K562 (cell line): ENCODE measurements at regions of chr3 and their contacts with region 1.

Region 1: DNA sequence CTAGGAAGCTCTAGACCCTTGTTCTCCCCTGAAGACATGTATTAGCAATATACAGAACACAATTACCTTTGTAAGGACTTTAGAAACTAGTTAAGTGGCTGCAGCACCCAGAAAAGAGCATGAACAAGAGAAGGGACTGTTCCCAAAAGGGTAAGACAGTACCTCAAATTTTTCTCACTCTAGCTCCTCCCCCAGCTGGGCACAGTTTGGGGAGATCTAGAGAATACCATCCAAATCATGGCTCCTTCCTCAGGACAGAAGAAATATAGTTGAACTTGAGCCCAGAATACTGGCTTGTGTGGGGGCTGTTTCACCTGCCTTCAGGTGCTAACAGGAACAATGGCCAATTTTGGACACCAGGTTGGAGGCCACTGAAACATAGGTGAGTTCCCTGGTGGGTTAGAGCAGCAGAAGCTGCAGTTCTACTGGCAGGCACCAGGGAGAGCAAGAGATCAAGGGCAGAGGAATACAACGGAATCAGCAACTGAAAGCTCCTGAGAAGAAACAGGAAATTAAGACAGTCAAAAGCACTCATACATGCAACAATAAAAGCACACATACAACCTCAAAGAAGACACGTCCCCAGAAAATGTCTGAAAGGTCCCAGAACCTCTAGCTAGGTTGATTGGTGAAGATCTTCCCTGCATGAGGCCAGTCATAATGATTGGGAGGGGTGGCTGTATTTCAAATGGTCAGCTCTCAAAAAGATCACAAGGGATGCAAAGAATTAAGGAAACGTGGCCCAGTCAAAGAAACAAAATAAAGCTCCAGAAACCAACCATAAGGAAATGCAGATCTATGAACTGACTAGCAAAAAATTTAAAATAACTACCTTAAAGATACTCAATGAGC is 104.9 kb upstream of the ASB14 start:
- DNase-seq: peak; percentile 19 to 58 (median 33)
- ATAC-seq: peak; percentile 93
- H3K4me3 ChIP-seq: no peak overlapping the region
- H3K27ac ChIP-seq: no peak overlapping the region
- H3K4me1 ChIP-seq: no peaks in the 10 kb centered on the region; a peak in 1 of 5 replicates
- H3K27me3 ChIP-seq: no peaks in the 10 kb centered on the region; a peak in 1 of 5 replicates
- CTCF ChIP-seq: peak; percentile 76 to 82 (median 76)
- EP300 ChIP-seq: no peak
- POLR2A ChIP-seq: no peak
- RAD21 ChIP-seq: peak; percentile 64 to 81

Region 2: GRCh38 chr3:57100046-57100695 is 297.2 kb before region 1 on chr3:
- CTCF ChIA-PET with region 1: no interaction called
- POLR2A ChIA-PET with region 1: no interaction called
- in situ Hi-C with region 1: no loop called
- intact Hi-C with region 1: loop called (anchors 10 kb)
- DNase-seq: peak; percentile 54 to 73 (median 58)
- ATAC-seq: peak; percentile 87
- H3K4me3 ChIP-seq: no peak overlapping the region
- H3K27ac ChIP-seq: no peak overlapping the region
- H3K4me1 ChIP-seq: no peaks in the 10 kb centered on the region; a peak in 1 of 5 replicates
- H3K27me3 ChIP-seq: peaks cover 0 to 14% of the 10 kb centered on the region in 2 experiments; a peak in 2 of 5 replicates
- CTCF ChIP-seq: peak; percentile 64 to 74 (median 68)
- EP300 ChIP-seq: no peak
- POLR2A ChIP-seq: no peak
- RAD21 ChIP-seq: peak; percentile 71 to 81

Region 3: DNA sequence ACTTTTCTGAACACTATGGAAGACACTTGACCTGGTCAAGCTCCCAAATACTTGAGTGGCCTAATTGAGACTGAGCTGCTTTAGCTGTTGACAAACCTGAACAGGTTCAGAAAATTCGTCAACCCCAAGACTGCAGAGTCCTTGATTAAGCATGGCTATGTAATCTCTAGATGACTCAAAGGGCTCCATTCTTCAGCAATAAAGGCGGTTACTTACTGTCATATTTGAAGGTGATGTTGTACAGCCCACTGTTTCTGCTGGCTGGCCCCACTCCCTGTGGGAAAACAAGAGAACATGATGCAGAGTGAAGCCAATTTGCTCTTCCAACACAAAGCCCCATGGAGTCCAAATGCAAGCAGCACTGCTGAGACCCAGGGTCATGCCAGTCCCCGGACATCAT is 277.4 kb before region 1 on chr3:
- CTCF ChIA-PET with region 1: no interaction called
- POLR2A ChIA-PET with region 1: no interaction called
- in situ Hi-C with region 1: no loop called
- intact Hi-C with region 1: no loop called
- DNase-seq: no peak
- ATAC-seq: no peak
- H3K4me3 ChIP-seq: no peak overlapping the region
- H3K27ac ChIP-seq: no peak overlapping the region
- H3K4me1 ChIP-seq: no peaks in the 10 kb centered on the region
- H3K27me3 ChIP-seq: peaks cover 11 to 41% of the 10 kb centered on the region in 2 experiments
- CTCF ChIP-seq: no peak
- EP300 ChIP-seq: no peak
- POLR2A ChIP-seq: no peak
- RAD21 ChIP-seq: no peak

Region 4: DNA sequence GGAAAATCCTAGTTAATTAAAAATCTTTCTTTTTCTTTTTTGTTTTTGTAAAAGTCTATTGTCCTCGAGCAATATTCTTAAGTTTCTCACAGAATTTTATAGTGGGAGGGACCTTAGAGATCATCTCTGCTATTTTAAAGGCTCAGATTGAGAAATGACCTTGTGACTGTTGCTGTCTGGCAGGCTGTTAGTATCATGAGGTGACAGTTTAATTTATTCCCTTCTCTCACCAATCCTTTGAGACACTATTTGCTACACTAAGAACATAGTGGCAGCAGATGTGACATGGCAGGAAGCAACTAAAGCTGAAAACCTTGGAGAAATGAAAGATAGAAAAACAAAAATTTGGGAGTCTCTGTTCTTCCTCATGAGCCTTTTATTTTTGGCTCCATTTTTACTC is 145.0 kb before region 1 on chr3:
- CTCF ChIA-PET with region 1: no interaction called
- POLR2A ChIA-PET with region 1: no interaction called
- in situ Hi-C with region 1: no loop called
- intact Hi-C with region 1: no loop called
- DNase-seq: no peak
- ATAC-seq: no peak
- H3K4me3 ChIP-seq: no peak overlapping the region
- H3K27ac ChIP-seq: no peak overlapping the region
- H3K4me1 ChIP-seq: no peaks in the 10 kb centered on the region
- H3K27me3 ChIP-seq: no peaks in the 10 kb centered on the region
- CTCF ChIP-seq: no peak
- EP300 ChIP-seq: no peak
- POLR2A ChIP-seq: no peak
- RAD21 ChIP-seq: no peak

Region 5: GRCh38 chr3:57575966-57576626 is 178.7 kb after region 1 on chr3:
- CTCF ChIA-PET with region 1: no interaction called
- POLR2A ChIA-PET with region 1: no interaction called
- in situ Hi-C with region 1: no loop called
- intact Hi-C with region 1: no loop called
- DNase-seq: no peak
- ATAC-seq: no peak
- H3K4me3 ChIP-seq: no peak overlapping the region
- H3K27ac ChIP-seq: no peak overlapping the region
- H3K4me1 ChIP-seq: no peaks in the 10 kb centered on the region; a peak in 1 of 5 replicates
- H3K27me3 ChIP-seq: no peaks in the 10 kb centered on the region
- CTCF ChIP-seq: no peak
- EP300 ChIP-seq: no peak
- POLR2A ChIP-seq: no peak
- RAD21 ChIP-seq: no peak

Region 6: GRCh38 chr3:57864853-57865252 is 467.5 kb after region 1 on chr3:
- CTCF ChIA-PET with region 1: no interaction called
- POLR2A ChIA-PET with region 1: no interaction called
- in situ Hi-C with region 1: no loop called
- intact Hi-C with region 1: loop called (anchors 10 kb)
- DNase-seq: peak in 1 of 4 experiments; percentile 6
- ATAC-seq: no peak
- H3K4me3 ChIP-seq: no peak overlapping the region
- H3K27ac ChIP-seq: no peak overlapping the region
- H3K4me1 ChIP-seq: no peaks in the 10 kb centered on the region
- H3K27me3 ChIP-seq: no peaks in the 10 kb centered on the region
- CTCF ChIP-seq: peak in 1 of 3 experiments; percentile 45; a peak in 2 of 6 replicates
- EP300 ChIP-seq: no peak
- POLR2A ChIP-seq: no peak
- RAD21 ChIP-seq: peak; percentile 39 to 46; a peak in 3 of 4 replicates